ENCODE measurements at regions of chr1 and their contacts with region 1.

Region 1: GRCh38 chr1:8911416-8911815 is 32.9 kb upstream of the ENO1 start:
- DNase-seq: no peak
- H3K4me3 ChIP-seq: no peak overlapping the region
- H3K27ac ChIP-seq: no peak overlapping the region
- H3K4me1 ChIP-seq: no peaks in the 10 kb centered on the region
- H3K27me3 ChIP-seq: no peaks in the 10 kb centered on the region
- CTCF ChIP-seq: no peak
- EP300 ChIP-seq: no peak
- RAD21 ChIP-seq: no peak

Region 2: GRCh38 chr1:8899076-8899475 is 12.3 kb before region 1 on chr1:
- CTCF ChIA-PET with region 1: no interaction called
- POLR2A ChIA-PET with region 1: no interaction called
- DNase-seq: no peak
- H3K4me3 ChIP-seq: no peak overlapping the region
- H3K27ac ChIP-seq: peak overlapping the region in 1 of 2 experiments; percentile 61; a peak in 1 of 4 replicates
- H3K4me1 ChIP-seq: peaks cover 7 to 11% of the 10 kb centered on the region in 2 experiments; a peak in 3 of 4 replicates
- H3K27me3 ChIP-seq: no peaks in the 10 kb centered on the region
- CTCF ChIP-seq: no peak
- EP300 ChIP-seq: no peak
- RAD21 ChIP-seq: no peak

Region 3: GRCh38 chr1:8987881-8988617 is 76.6 kb after region 1 on chr1:
- CTCF ChIA-PET with region 1: interaction called, 82 read pairs
- POLR2A ChIA-PET with region 1: no interaction called
- DNase-seq: peak; percentile 78
- H3K4me3 ChIP-seq: no peak overlapping the region; a peak in 1 of 4 replicates
- H3K27ac ChIP-seq: peak overlapping the region in 1 of 2 experiments; percentile 45; a peak in 1 of 4 replicates
- H3K4me1 ChIP-seq: no peaks in the 10 kb centered on the region; a peak in 1 of 4 replicates
- H3K27me3 ChIP-seq: no peaks in the 10 kb centered on the region
- CTCF ChIP-seq: peak; percentile 89
- EP300 ChIP-seq: no peak
- RAD21 ChIP-seq: peak; percentile 80

Measured in SK-N-SH (cell line).